Activated CD4-positive, alpha-beta memory T cell treated with anti-CD3 and anti-CD28 coated beads for 36 hours (primary cell): ENCODE measurements at regions of chr11 and their contacts with region 1.

Region 1: DNA sequence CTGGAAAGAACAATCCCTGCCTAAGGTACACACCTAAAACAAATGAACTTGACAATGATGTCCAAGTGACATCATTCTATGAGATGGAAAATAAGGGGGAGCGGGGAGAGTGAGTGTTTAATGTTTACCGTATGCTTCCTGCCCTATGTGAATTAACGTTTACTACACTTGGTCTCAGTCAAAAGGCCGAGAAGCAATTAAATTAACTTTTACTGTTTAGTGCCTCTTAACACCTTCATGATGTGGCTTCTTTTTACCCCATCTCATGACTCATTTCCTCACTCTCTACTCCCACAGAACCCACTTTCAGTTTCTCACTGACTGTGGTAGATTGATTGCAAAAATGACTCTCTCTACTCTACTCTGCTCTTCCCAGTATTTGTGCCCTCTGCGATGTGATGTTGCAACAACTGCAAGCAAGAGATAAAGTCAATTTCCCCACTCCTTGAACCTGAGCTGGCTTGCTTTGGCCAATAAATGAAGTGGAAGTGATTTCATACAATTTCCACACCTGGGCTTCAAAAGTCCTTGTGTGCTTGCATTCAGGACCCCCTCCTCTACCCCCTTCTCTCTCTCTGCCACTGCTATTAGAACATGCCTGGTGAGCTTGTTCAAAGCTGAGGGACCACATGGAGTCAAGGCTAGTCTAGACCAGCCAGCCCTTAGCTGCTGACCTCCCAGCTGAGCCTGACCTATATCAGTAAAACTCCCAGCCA is 11.6 kb upstream of the ALKBH3 start:
- DNase-seq: peak; percentile 54
- H3K4me3 Mint-ChIP-seq: no peak overlapping the region
- H3K27ac Mint-ChIP-seq: peak overlapping the region; percentile 15
- H3K4me1 Mint-ChIP-seq: peaks cover 16% of the 10 kb centered on the region
- H3K27me3 Mint-ChIP-seq: peaks cover 49% of the 10 kb centered on the region

Region 2: GRCh38 chr11:43311791-43312607 is 557.0 kb before region 1 on chr11 and contains the start of gene API5:
- CTCF ChIA-PET with region 1: no interaction called
- POLR2A ChIA-PET with region 1: no interaction called
- intact Hi-C with region 1: loop called (anchors 5 kb)
- DNase-seq: peak; percentile 96
- H3K4me3 Mint-ChIP-seq: peak within 1 kb of the TSS; percentile 99
- H3K27ac Mint-ChIP-seq: peak within 1 kb of the TSS; percentile 82
- H3K4me1 Mint-ChIP-seq: peaks cover 46% of the 10 kb centered on the region
- H3K27me3 Mint-ChIP-seq: no peaks in the 10 kb centered on the region
- total RNA-seq, gene API5: 154 to 166 TPM

Region 3: GRCh38 chr11:43680521-43681400 is 188.2 kb before region 1 on chr11 and contains the start of gene HSD17B12:
- CTCF ChIA-PET with region 1: no interaction called
- POLR2A ChIA-PET with region 1: no interaction called
- intact Hi-C with region 1: loop called (anchors 2 kb)
- DNase-seq: peak; percentile 100
- H3K4me3 Mint-ChIP-seq: peak within 1 kb of the TSS; percentile 92
- H3K27ac Mint-ChIP-seq: peak within 1 kb of the TSS; percentile 94
- H3K4me1 Mint-ChIP-seq: peaks cover 33% of the 10 kb centered on the region
- H3K27me3 Mint-ChIP-seq: no peaks in the 10 kb centered on the region
- total RNA-seq, gene HSD17B12: 32.8 to 35.3 TPM

Region 4: DNA sequence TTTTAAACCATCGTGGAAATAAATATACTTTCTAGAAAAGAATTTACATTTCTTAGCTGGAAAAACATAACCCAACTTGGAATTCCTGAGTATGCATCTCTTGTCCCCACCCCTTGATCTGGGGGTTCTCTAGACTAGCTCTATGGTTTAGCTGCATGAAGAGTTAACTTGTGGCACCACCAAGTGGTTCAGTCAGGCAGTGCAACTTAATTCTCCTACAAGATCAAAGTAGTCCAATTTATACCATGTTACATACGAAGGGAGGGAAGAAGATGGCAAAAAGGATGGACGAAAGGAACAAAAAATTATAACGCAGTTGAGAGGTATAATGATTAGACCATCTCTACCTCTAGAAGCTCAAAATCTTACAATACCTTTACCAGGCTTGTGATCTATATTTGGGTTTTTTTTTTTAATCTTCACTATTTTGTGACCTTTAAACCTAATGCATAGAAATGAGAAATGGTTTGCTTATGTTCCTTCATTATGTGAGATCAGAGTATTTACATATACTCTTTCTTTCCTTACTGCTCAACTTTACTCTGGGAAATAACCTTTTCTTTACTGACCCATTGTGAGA is 16.9 kb before region 1 on chr11:
- CTCF ChIA-PET with region 1: interaction called, 15 read pairs
- POLR2A ChIA-PET with region 1: no interaction called
- intact Hi-C with region 1: no loop called
- DNase-seq: peak; percentile 73
- H3K4me3 Mint-ChIP-seq: no peak overlapping the region
- H3K27ac Mint-ChIP-seq: no peak overlapping the region
- H3K4me1 Mint-ChIP-seq: no peaks in the 10 kb centered on the region
- H3K27me3 Mint-ChIP-seq: no peaks in the 10 kb centered on the region

Region 5: GRCh38 chr11:43920598-43921419 is 51.8 kb after region 1 on chr11:
- CTCF ChIA-PET with region 1: no interaction called
- POLR2A ChIA-PET with region 1: no interaction called
- intact Hi-C with region 1: loop called (anchors 1 kb)
- DNase-seq: peak; percentile 65
- H3K4me3 Mint-ChIP-seq: no peak overlapping the region
- H3K27ac Mint-ChIP-seq: no peak overlapping the region
- H3K4me1 Mint-ChIP-seq: peaks cover 20% of the 10 kb centered on the region
- H3K27me3 Mint-ChIP-seq: no peaks in the 10 kb centered on the region